ENCODE measurements at regions of chr10 and their contacts with region 1.

Region 1: DNA sequence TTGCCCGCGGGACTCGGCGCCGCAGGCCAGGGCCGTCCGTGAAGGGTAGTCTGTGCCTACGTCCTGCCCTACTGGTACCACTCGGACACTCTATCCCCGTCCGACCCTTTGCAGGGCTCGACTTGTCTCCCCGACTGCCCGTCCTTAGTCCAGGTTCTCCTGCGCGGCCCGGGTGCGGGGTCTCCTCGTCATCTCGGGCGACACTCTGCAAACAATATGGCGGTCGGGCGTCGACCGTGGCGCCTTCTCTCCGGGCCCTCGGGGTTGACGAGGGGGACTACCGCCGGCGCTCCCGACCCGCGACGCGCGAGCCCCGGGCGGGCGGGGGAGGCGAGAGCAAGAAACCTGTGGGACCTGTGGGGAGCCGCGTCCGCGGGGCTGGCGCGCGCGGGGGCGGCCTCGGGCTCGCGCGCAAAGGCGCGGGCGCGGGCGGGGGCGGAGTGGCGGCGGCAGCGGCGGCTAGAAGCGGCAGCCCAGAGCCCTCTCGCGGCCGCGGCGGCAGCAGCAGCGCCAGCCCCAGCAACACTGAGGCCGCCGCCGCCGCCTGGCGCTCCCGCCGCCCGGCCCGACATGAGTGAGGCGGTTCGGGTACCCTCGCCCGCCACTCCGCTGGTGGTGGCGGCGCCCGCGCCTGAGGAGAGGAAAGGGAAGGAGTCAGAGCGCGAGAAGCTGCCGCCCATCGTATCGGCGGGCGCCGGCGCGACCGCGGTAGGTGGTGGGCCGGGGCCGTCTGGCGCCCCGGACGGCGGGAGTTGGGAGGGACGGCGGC is at the start of gene HECTD2:
- DNase-seq: peak; percentile 60 to 97 (median 79)

Region 2: DNA sequence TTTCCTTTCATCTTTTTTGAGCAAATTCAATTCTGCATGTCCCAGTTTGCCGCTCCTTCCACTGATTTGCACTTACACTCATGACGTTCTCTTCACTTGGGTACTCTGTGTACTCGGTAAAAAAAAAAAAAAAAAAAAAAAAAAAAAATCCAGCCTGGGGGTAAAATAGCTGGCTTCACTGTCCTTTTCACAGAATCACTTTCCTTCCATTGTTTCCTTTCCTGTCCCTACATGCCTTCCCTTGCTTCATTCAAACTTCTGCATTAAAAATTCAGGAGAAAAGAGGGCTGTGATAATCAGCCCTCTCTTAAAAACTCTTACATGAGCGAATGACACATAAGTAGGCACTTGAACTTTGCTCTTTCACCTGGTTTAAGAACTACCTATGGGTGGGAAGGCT is 497.9 kb before region 1 on chr10:
- intact Hi-C with region 1: loop called (anchors 5 kb)
- DNase-seq: no peak

Region 3: DNA sequence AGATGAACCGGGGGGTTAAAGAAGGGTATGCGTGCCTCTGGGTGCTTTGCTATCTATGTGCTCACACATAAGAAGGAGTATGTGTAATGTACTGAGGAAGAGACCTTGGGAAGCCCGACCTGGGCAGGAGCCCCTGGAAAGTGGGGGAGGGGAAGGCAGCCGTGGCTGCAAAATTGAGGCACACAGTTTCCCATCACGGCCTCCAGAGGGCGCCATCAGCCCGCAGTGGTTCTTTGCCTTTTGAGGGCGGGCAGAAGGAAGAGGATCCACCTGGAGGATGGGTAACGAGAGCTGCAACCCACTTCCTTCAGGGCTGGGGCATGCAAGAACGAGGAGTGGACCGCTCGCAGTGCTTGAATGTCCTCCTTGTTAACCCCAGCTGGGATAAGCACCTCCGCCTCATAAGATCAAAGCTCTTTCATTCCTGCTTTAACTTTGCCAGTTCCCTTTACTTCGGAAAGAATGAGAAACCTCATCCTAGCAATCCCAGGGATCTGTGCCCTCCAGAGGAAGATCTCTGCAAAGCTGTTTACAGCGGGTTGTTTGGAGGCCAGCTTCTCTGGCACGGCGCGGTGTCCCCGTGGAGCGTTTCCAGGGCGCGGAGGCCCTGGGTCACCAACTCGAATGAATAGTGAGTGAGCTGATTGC is 111.7 kb before region 1 on chr10:
- intact Hi-C with region 1: loop called (anchors 10 kb)
- DNase-seq: peak; percentile 68 to 96 (median 78)